GM12878 (cell line): ENCODE measurements at regions of chr1 and their contacts with region 1.

Region 1: DNA sequence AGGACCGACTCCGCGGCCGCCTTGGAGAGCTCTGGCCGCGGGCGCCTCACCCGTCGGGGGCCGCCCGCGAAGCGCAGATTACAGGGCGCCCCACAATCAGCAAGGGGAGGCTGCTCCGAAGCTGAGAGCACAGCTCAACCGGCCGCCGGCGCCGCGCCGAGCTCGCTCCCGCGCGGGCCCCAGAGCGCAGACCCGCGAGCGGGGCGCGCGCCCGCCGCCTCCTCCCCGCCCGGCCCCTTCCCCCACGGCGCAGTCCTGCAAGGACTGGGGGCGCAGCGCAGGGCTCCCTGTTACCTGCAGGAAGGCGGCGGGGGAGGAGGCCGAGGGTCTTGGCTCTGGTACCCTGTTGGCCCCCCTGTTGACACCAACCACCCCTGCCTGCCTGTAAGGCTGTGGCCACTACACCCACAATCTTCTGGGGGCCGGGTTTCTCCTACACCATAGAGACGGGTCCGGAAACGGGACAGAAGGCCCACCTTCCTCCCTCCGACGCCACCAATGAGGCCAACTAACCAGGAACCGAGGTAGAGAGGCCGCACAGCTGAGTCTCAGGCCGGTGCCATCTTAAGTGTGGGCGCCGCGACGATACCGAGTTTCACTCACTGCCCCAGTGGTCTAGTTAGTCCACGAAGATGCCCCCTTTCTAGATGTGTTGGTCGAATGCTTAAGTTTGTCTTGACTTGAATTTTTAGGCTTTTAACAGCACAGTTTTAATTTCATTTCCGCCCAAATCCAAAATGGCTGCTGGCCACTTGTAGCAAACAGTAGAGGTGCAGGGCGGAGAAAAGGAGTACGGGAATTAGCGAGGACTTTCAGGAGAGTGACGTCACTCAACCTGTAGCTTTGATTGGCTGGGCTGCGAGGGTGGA is at the start of gene SCYL3:
- DNase-seq: peak; percentile 98
- ATAC-seq: peak; percentile 86
- H3K4me3 ChIP-seq: peak within 1 kb of the TSS; percentile 93
- H3K27ac ChIP-seq: peak within 1 kb of the TSS; percentile 99
- H3K4me1 ChIP-seq: peaks cover 23% of the 10 kb centered on the region
- H3K27me3 ChIP-seq: no peaks in the 10 kb centered on the region
- CTCF ChIP-seq: no peak
- EP300 ChIP-seq: peak; percentile 5 to 39; a peak in 1 of 4 replicates
- POLR2A ChIP-seq: peak; percentile 93
- RAD21 ChIP-seq: no peak
- polyA plus RNA-seq, gene SCYL3: 4.3 to 5.6 TPM

Region 2: DNA sequence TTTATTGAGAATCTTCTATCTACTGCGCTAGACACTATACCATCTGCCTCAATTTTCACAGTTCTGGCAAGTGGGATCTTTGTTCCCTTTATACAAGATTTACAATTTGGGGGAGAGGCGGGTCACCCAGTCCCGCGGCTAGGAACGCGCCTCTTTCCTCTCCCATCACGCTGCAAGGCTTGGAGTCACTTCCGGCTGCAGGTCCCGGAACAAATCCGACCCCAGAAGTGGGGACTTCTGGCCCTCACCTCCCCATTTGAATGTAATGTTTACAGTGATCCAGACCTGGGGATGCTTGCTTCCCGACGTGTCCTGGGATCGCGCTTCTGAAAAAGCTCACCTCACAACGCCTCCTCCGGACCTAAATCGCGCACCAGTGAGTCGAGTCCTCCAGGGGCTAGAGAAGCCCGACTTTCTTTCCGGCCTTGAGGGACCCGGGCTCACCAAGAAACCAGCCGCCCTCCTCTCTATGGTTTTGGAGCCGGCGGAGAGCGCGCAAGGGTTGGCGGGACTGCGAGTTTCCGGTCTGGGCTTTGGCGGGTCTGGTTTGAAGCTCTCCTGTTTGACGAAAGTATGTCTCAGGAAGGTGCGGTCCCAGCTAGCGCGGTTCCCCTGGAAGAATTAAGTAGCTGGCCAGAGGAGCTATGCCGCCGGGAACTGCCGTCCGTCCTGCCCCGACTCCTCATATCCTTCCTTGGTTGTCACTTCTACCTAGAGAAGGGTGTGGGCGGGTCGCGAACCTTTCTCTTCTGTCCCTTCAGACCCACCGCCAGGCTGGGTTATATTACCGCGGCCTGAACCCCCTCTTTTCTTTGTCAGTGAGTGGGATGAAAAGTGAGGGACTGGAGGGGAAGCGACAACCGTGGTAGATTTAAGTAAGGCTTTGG is 99.0 kb before region 1 on chr1 and contains the start of gene METTL18:
- CTCF ChIA-PET with region 1: no interaction called
- POLR2A ChIA-PET with region 1: interaction called, 20 read pairs
- RAD21 ChIA-PET with region 1: interaction called, 5 read pairs
- SMC1A ChIA-PET with region 1: interaction called, 3 read pairs
- in situ Hi-C with region 1: no loop called
- intact Hi-C with region 1: no loop called
- DNase-seq: peak; percentile 84
- ATAC-seq: peak; percentile 95
- H3K4me3 ChIP-seq: peak within 1 kb of the TSS; percentile 86
- H3K27ac ChIP-seq: peak within 1 kb of the TSS; percentile 76
- H3K4me1 ChIP-seq: 0 out of 2 replicates have a peak, but pooled peaks cover 2% of the 10 kb centered on the region
- H3K27me3 ChIP-seq: no peaks in the 10 kb centered on the region
- CTCF ChIP-seq: no peak
- EP300 ChIP-seq: no peak
- POLR2A ChIP-seq: peak; percentile 84
- RAD21 ChIP-seq: no peak
- polyA plus RNA-seq, gene METTL18: 30.0 to 31.8 TPM

Region 3: DNA sequence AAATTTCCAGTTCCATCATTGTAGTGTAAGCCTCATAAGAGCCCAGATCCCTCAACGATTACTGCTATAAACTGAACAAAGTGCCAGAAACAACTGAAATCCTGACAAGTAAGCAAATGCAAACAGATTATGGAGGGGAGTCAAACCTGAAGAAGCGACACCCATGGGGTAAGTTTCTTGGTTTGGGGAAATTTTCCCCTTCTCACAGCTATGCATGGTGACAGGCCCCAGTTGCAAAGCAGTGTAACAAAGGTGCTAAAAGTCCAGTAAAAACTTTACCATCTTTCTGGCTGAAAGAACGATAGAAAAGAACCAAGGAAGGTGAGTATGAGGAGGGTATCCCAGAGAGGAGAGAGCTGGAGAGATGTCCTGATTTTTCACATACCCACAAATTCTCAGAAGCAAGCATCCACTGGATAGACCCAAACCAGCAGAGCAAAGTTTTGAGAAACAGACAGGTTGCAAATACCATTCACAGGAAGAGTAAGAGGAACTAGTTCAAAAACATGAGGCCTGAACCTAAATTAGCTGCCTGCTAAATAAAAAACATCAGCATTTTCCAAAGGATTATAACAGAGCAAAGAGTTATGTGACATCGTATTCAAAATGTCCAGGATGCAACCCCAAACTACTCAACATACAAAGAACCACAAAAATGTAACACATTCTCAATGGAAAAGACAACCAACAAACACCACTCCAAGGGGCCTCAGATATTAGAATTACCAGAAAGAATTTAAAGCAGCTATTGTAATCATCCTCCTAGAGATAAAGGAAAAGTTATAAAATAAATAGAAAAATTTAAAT is 14.5 kb before region 1 on chr1:
- CTCF ChIA-PET with region 1: no interaction called
- POLR2A ChIA-PET with region 1: interaction called, 12 read pairs
- RAD21 ChIA-PET with region 1: interaction called, 5 read pairs
- SMC1A ChIA-PET with region 1: interaction called, 17 read pairs
- in situ Hi-C with region 1: no loop called
- intact Hi-C with region 1: no loop called
- DNase-seq: no peak
- ATAC-seq: peak; percentile 69
- H3K4me3 ChIP-seq: no peak overlapping the region
- H3K27ac ChIP-seq: peak overlapping the region; percentile 45
- H3K4me1 ChIP-seq: peaks cover 5% of the 10 kb centered on the region
- H3K27me3 ChIP-seq: no peaks in the 10 kb centered on the region
- CTCF ChIP-seq: no peak
- EP300 ChIP-seq: no peak
- POLR2A ChIP-seq: no peak
- RAD21 ChIP-seq: no peak

Region 4: DNA sequence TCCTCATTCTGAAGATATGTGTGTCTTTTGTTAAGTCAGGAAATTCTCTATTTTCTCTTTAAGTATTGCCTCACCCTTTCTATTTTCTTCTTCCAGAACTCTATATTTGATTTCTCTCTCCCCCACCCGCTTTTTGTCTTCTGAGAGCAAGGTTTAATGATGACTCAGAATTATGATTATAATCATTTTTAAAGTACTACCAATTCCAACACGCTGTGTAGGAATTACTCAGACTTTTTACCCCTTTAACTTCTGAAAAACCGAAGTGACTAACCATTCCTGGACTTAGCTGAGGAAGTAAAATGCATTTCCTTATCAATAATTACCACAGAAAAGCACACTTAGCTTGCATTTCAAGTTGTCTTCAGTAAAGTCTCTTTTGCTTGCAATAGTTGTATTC is 20.8 kb after region 1 on chr1:
- CTCF ChIA-PET with region 1: interaction called, 19 read pairs
- POLR2A ChIA-PET with region 1: interaction called, 131 read pairs
- RAD21 ChIA-PET with region 1: interaction called, 104 read pairs
- SMC1A ChIA-PET with region 1: interaction called, 165 read pairs
- in situ Hi-C with region 1: no loop called
- intact Hi-C with region 1: loop called (anchors 1 kb)
- DNase-seq: no peak
- ATAC-seq: no peak
- H3K4me3 ChIP-seq: peak overlapping the region; percentile 61
- H3K27ac ChIP-seq: peak overlapping the region; percentile 78
- H3K4me1 ChIP-seq: peaks cover 55% of the 10 kb centered on the region
- H3K27me3 ChIP-seq: no peaks in the 10 kb centered on the region
- CTCF ChIP-seq: no peak
- EP300 ChIP-seq: no peak
- POLR2A ChIP-seq: no peak
- RAD21 ChIP-seq: no peak

Region 5: GRCh38 chr1:170531758-170532657 is 638.3 kb after region 1 on chr1 and contains the start of gene GORAB:
- CTCF ChIA-PET with region 1: interaction called, 3 read pairs
- POLR2A ChIA-PET with region 1: no interaction called
- RAD21 ChIA-PET with region 1: no interaction called
- SMC1A ChIA-PET with region 1: no interaction called
- in situ Hi-C with region 1: no loop called
- intact Hi-C with region 1: loop called (anchors 5 kb)
- DNase-seq: peak; percentile 82
- ATAC-seq: peak; percentile 94
- H3K4me3 ChIP-seq: peak within 1 kb of the TSS; percentile 85
- H3K27ac ChIP-seq: peak within 1 kb of the TSS; percentile 99
- H3K4me1 ChIP-seq: no peaks in the 10 kb centered on the region
- H3K27me3 ChIP-seq: no peaks in the 10 kb centered on the region
- CTCF ChIP-seq: no peak
- EP300 ChIP-seq: no peak
- POLR2A ChIP-seq: peak; percentile 93
- RAD21 ChIP-seq: no peak
- polyA plus RNA-seq, gene GORAB: 5.5 to 7.6 TPM